ENCODE measurements at regions of chr3 and their contacts with region 1.

Region 1: DNA sequence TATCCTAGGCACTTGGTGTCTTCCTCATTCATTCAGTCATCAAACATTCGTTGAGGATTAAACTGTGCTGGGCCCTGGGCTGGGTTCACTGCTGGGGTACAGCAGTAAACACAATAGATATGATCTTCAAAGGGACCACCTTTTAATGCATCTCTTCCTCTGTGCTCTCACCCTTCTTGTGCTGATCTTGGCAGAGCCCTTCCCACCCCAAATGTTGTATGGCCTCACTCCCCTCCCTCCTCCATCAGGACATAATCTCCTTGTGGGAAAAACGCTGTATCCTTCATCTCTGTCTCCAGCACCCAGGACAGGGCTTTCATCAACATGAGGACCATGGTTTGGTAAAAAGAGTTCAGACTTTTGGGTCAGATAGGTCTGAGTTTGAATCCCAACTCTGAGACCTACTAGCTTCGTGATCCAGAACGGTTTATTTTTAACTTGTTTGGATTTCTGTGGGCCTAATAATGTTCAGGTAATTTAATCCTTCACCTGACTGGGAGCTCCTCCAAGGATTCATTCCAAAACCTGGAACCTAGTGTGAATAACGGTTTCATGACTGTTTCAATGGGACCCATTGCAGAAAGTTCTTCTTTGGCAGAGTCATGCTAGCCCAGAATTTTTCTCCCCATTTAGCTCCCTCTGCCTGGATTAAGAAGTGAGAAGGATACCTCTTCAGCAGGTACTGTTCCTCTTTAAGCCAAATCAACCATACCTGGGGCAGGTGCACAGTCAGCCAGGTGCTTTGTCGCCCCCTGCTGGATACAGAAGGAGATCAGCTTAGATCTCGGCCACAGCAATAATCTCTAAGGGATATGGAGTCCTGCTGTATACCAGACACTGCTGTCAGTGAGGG is 5.2 kb upstream of the WNT7A start:
- DNase-seq: peak; percentile 78
- ATAC-seq: peak; percentile 70
- H3K4me3 Mint-ChIP-seq: no peak overlapping the region
- H3K27ac Mint-ChIP-seq: no peak overlapping the region
- H3K4me1 Mint-ChIP-seq: no peaks in the 10 kb centered on the region
- H3K27me3 Mint-ChIP-seq: peaks cover 18% of the 10 kb centered on the region
- CTCF ChIP-seq: peak; percentile 92

Region 2: GRCh38 chr3:13564751-13565560 is 320.1 kb before region 1 on chr3:
- CTCF ChIA-PET with region 1: no interaction called
- POLR2A ChIA-PET with region 1: no interaction called
- intact Hi-C with region 1: no loop called
- DNase-seq: peak; percentile 56
- ATAC-seq: peak; percentile 92
- H3K4me3 Mint-ChIP-seq: no peak overlapping the region
- H3K27ac Mint-ChIP-seq: no peak overlapping the region
- H3K4me1 Mint-ChIP-seq: peaks cover 12% of the 10 kb centered on the region
- H3K27me3 Mint-ChIP-seq: no peaks in the 10 kb centered on the region
- CTCF ChIP-seq: no peak

Region 3: GRCh38 chr3:13648060-13649001 is 236.7 kb before region 1 on chr3:
- CTCF ChIA-PET with region 1: interaction called, 383 read pairs
- POLR2A ChIA-PET with region 1: no interaction called
- intact Hi-C with region 1: no loop called
- DNase-seq: peak; percentile 84
- ATAC-seq: peak; percentile 38
- H3K4me3 Mint-ChIP-seq: no peak overlapping the region
- H3K27ac Mint-ChIP-seq: no peak overlapping the region
- H3K4me1 Mint-ChIP-seq: peaks cover 26% of the 10 kb centered on the region
- H3K27me3 Mint-ChIP-seq: peaks cover 16% of the 10 kb centered on the region
- CTCF ChIP-seq: peak; percentile 98

Region 4: GRCh38 chr3:13866041-13866965 is 18.8 kb before region 1 on chr3:
- CTCF ChIA-PET with region 1: interaction called, 23 read pairs
- POLR2A ChIA-PET with region 1: no interaction called
- intact Hi-C with region 1: no loop called
- DNase-seq: peak; percentile 83
- ATAC-seq: peak; percentile 88
- H3K4me3 Mint-ChIP-seq: peak overlapping the region; percentile 4
- H3K27ac Mint-ChIP-seq: peak overlapping the region; percentile 85
- H3K4me1 Mint-ChIP-seq: peaks cover 35% of the 10 kb centered on the region
- H3K27me3 Mint-ChIP-seq: no peaks in the 10 kb centered on the region
- CTCF ChIP-seq: no peak

Region 5: GRCh38 chr3:13895155-13896105 is 10.4 kb after region 1 on chr3:
- CTCF ChIA-PET with region 1: interaction called, 31 read pairs
- POLR2A ChIA-PET with region 1: no interaction called
- intact Hi-C with region 1: no loop called
- DNase-seq: peak; percentile 98
- ATAC-seq: peak; percentile 99
- H3K4me3 Mint-ChIP-seq: peak overlapping the region; percentile 83
- H3K27ac Mint-ChIP-seq: peak overlapping the region; percentile 76
- H3K4me1 Mint-ChIP-seq: peaks cover 22% of the 10 kb centered on the region
- H3K27me3 Mint-ChIP-seq: no peaks in the 10 kb centered on the region
- CTCF ChIP-seq: no peak

Region 6: DNA sequence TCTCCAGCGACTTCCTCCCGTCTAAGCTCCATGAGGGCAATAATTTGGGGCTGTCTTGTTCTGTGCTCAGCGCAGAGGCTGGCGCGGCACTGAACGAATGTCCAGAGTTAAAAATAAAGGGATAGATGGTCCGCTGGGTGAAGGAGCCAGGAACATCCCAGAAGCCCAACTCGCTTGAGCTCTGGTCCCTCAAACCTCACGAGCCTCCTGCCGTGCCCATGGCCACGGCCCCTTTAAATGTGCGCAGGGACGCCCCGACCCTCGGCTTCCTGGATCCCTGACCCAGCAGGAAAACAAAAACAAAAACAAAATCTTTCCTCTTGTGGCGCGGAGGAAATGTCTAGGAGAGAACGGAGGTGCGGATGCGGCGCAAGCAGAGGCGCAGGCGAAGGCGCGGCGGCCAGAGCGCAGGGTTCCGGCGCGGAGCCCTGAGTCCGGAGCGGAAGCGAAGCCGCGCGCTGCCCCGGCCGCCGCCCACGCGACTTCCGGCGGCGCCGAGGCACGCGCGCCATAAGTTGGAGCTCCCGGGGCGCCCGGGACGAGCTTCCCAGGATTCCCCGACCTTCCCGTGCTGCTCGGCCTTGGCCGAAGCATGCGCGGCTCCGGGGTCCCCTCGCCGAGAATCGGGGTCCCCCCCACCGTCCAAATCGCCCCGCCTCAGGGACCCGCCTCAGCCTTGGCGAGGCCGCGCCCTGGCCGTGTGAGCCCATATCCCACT is 47.7 kb after region 1 on chr3:
- CTCF ChIA-PET with region 1: no interaction called
- POLR2A ChIA-PET with region 1: no interaction called
- intact Hi-C with region 1: no loop called
- DNase-seq: peak; percentile 20
- ATAC-seq: peak; percentile 47
- H3K4me3 Mint-ChIP-seq: peak overlapping the region; percentile 70
- H3K27ac Mint-ChIP-seq: peak overlapping the region; percentile 74
- H3K4me1 Mint-ChIP-seq: peaks cover 4% of the 10 kb centered on the region
- H3K27me3 Mint-ChIP-seq: peaks cover 24% of the 10 kb centered on the region
- CTCF ChIP-seq: no peak

Region 7: GRCh38 chr3:14113965-14114635 is 229.0 kb after region 1 on chr3:
- CTCF ChIA-PET with region 1: no interaction called
- POLR2A ChIA-PET with region 1: no interaction called
- intact Hi-C with region 1: no loop called
- DNase-seq: no peak
- ATAC-seq: no peak
- H3K4me3 Mint-ChIP-seq: no peak overlapping the region
- H3K27ac Mint-ChIP-seq: no peak overlapping the region
- H3K4me1 Mint-ChIP-seq: peaks cover 3% of the 10 kb centered on the region
- H3K27me3 Mint-ChIP-seq: no peaks in the 10 kb centered on the region
- CTCF ChIP-seq: peak; percentile 12

Region 8: DNA sequence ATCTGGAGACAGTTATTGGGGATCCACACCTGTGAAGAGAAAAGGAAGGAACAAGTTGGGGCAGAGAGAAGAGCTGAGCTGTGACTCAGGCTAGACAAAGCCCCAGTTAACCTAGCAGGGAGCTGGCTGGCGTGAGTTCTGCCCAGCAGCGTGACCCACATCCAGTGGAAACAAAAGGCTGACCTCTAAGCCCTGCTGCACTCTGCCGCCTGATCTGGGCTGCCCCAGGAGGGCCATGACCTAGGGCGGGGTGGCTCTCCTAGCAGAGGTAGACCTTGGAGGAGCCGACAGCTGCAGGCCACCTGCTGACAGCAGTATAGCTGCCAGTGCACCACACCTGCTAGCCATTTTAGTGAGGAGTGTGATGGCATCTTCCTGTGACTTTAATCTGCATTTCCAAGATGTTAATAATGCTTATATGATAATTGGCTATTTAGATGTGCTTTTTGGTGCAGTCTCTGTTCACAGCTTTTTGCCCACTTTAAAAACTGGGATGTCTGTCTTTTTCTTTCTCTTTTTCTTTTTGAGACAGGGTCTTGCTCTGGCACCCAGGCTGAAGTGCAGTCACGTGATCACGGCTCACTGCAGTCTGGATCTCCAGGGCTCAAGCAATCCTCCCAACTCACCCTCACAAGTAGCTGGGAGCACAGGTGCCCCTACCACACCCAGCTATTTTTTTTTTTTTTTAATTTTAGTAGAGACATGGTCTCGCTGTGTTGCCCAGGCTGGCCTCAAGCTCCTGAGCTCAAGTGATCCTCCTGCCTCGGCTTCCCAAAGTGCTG is 371.7 kb after region 1 on chr3:
- CTCF ChIA-PET with region 1: no interaction called
- POLR2A ChIA-PET with region 1: no interaction called
- intact Hi-C with region 1: no loop called
- DNase-seq: no peak
- ATAC-seq: no peak
- H3K4me3 Mint-ChIP-seq: no peak overlapping the region
- H3K27ac Mint-ChIP-seq: no peak overlapping the region
- H3K4me1 Mint-ChIP-seq: no peaks in the 10 kb centered on the region
- H3K27me3 Mint-ChIP-seq: no peaks in the 10 kb centered on the region
- CTCF ChIP-seq: no peak